Motor neuron (in vitro differentiated cells): ENCODE measurements at regions of chr2 and their contacts with region 1.

Region 1: GRCh38 chr2:39216346-39217191 is 27.2 kb downstream of the CDKL4 start:
- ATAC-seq: no peak
- H3K4me3 ChIP-seq: no peak overlapping the region
- H3K27ac ChIP-seq: no peak overlapping the region
- H3K4me1 ChIP-seq: no peaks in the 10 kb centered on the region

Region 2: GRCh38 chr2:39059366-39059952 is 157.1 kb before region 1 on chr2:
- in situ Hi-C with region 1: loop called in 2 of 9 experiments (anchors 10 to 25 kb)
- ATAC-seq: peak in 2 of 8 experiments; percentile 48 to 65
- H3K4me3 ChIP-seq: no peak overlapping the region
- H3K27ac ChIP-seq: no peak overlapping the region
- H3K4me1 ChIP-seq: no peaks in the 10 kb centered on the region